WTC11 (cell line): ENCODE measurements at regions of chr5 and their contacts with region 1.

Region 1: DNA sequence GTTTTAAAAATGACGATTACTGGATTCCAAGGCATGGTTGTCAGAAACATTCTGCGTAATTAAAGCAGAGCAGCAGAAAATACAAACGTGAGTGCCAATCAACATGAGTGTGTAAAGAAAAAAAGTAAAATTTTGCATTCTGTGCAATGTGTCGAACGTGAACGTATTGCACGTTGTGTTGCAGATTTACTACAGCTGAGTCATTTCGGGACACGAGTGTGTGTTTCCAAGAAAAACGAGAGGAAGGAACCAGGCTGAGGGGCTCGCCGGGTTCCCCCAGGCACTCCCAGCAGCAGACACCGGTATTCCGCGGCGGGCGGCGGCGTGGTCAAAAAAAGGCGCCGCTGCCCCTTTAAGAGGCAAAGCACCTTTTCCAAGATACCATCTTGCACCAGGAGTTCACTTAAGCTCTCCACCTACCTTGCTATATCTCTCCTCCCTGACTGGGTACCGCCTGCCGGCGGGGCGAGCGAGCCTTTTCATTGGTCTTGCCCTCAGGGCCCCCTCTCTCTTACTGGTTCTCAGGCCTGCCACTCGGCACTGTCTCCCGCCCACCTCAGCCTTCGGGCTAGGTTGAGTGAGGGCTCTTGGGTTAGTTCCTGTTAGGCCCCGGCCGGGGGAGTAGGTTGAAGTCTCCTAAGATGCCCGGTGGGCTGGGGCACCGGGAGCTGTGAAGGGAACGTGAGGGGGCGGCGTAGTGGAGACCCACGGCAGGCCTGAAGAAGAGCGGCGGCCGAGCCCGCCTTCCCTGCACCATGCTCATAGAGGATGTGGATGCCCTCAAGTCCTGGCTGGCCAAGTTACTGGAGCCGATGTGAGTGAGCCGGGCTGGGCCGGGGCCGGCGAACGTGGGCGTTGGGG is at the start of gene RBM27:
- DNase-seq: peak; percentile 99
- ATAC-seq: peak; percentile 100
- H3K4me3 Mint-ChIP-seq: no peak within 1 kb of the TSS
- H3K27ac Mint-ChIP-seq: no peak within 1 kb of the TSS
- H3K4me1 Mint-ChIP-seq: peaks cover 13% of the 10 kb centered on the region
- H3K27me3 Mint-ChIP-seq: no peaks in the 10 kb centered on the region
- CTCF ChIP-seq: no peak
- total RNA-seq, gene RBM27: 29.4 to 32.6 TPM (median 29.8 TPM) in 3 replicates

Region 2: GRCh38 chr5:146188358-146188757 is 14.9 kb before region 1 on chr5:
- CTCF ChIA-PET with region 1: interaction called, 3 read pairs
- POLR2A ChIA-PET with region 1: interaction called, 14 read pairs
- DNase-seq: no peak
- ATAC-seq: no peak
- H3K4me3 Mint-ChIP-seq: no peak overlapping the region
- H3K27ac Mint-ChIP-seq: no peak overlapping the region
- H3K4me1 Mint-ChIP-seq: no peaks in the 10 kb centered on the region; the same call in 1 of the 2 replicates
- H3K27me3 Mint-ChIP-seq: peaks cover 2% of the 10 kb centered on the region; the same call in 1 of the 2 replicates
- CTCF ChIP-seq: no peak